ENCODE measurements at regions of chr13 and their contacts with region 1.

Region 1: GRCh38 chr13:40433577-40433976 is 232.9 kb downstream of the FOXO1 start:
- DNase-seq: no peak
- ATAC-seq: peak; percentile 68
- H3K4me3 Mint-ChIP-seq: peak overlapping the region; percentile 60
- H3K27ac Mint-ChIP-seq: peak overlapping the region; percentile 89
- H3K4me1 Mint-ChIP-seq: peaks cover 92% of the 10 kb centered on the region
- H3K27me3 Mint-ChIP-seq: no peaks in the 10 kb centered on the region
- CTCF ChIP-seq: no peak

Region 2: DNA sequence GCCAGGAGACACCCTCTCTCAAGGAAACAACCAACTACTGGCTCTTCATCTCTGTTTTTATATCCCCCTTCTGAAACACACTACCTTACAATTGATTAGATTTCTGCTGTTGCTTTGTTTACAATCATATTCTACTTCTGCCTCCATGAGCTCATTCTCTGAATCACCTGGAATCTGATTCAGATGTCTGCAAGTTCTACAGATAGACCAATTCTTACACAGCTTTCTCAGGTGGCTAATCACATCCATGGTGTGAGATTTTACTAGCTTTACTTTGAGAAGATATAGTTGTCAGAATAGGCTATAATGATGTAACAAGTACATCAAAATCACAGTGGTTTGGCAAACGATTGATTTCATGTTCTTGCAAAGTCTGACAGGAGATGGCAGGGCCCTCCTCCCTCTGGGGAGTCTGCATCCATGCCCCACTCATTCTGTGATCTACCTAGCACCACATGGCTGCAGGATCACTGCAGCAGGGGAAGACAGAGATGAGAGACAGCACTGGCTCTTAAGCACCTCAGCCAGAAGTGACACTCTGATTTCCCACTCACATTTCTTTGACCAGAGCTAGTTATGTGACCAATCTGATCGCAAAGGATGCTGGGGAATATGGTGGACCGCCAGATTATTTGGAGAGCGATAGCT is 10.9 kb before region 1 on chr13:
- CTCF ChIA-PET with region 1: interaction called, 6 read pairs
- POLR2A ChIA-PET with region 1: interaction called, 9 read pairs
- intact Hi-C with region 1: loop called (anchors 1 kb)
- DNase-seq: no peak
- ATAC-seq: no peak
- H3K4me3 Mint-ChIP-seq: no peak overlapping the region
- H3K27ac Mint-ChIP-seq: no peak overlapping the region
- H3K4me1 Mint-ChIP-seq: peaks cover 28% of the 10 kb centered on the region
- H3K27me3 Mint-ChIP-seq: no peaks in the 10 kb centered on the region
- CTCF ChIP-seq: no peak